PC-3 (cell line): ENCODE measurements at regions of chr5 and their contacts with region 1.

Region 1: GRCh38 chr5:83740741-83741140 is 20.1 kb upstream of the HAPLN1 start:
- DNase-seq: no peak
- ATAC-seq: no peak
- H3K4me3 ChIP-seq: no peak overlapping the region
- H3K27ac ChIP-seq: no peak overlapping the region
- H3K4me1 ChIP-seq: peaks cover 8% of the 10 kb centered on the region; the same call in 1 of the 2 replicates
- H3K27me3 ChIP-seq: no peaks in the 10 kb centered on the region
- CTCF ChIP-seq: no peak

Region 2: DNA sequence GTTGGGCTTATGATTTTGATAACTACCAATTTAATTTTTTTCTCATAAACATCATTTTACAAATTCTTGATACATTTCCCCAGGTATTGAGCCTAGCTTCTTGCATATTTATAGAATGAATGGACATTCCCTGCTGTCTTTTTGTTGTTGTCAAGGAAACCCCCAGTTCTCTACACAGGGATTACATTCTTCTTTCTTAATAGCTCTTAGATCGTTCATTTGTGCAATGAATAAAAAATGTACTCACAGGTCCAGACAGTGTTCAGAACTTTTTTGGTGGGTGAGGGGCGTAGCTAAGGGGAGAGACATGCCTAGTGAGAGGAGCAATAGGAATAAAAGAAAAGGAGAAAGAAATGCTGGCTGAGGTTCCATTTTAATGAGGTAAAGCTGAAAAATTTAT is 210.5 kb before region 1 on chr5:
- CTCF ChIA-PET with region 1: no interaction called
- POLR2A ChIA-PET with region 1: no interaction called
- intact Hi-C with region 1: no loop called
- DNase-seq: no peak
- ATAC-seq: no peak
- H3K4me3 ChIP-seq: no peak overlapping the region
- H3K27ac ChIP-seq: no peak overlapping the region
- H3K4me1 ChIP-seq: no peaks in the 10 kb centered on the region
- H3K27me3 ChIP-seq: no peaks in the 10 kb centered on the region
- CTCF ChIP-seq: no peak

Region 3: GRCh38 chr5:83752700-83753099 is 12.0 kb after region 1 on chr5:
- CTCF ChIA-PET with region 1: no interaction called
- POLR2A ChIA-PET with region 1: no interaction called
- intact Hi-C with region 1: loop called (anchors 1 kb)
- DNase-seq: peak; percentile 34
- ATAC-seq: peak; percentile 81
- H3K4me3 ChIP-seq: no peak overlapping the region
- H3K27ac ChIP-seq: no peak overlapping the region
- H3K4me1 ChIP-seq: 0 out of 2 replicates have a peak, but pooled peaks cover 4% of the 10 kb centered on the region
- H3K27me3 ChIP-seq: no peaks in the 10 kb centered on the region
- CTCF ChIP-seq: no peak

Region 4: GRCh38 chr5:83777856-83778255 is 37.1 kb after region 1 on chr5:
- CTCF ChIA-PET with region 1: no interaction called
- POLR2A ChIA-PET with region 1: no interaction called
- intact Hi-C with region 1: loop called (anchors 5 kb)
- DNase-seq: no peak
- ATAC-seq: no peak
- H3K4me3 ChIP-seq: no peak overlapping the region
- H3K27ac ChIP-seq: no peak overlapping the region
- H3K4me1 ChIP-seq: peaks cover 17% of the 10 kb centered on the region
- H3K27me3 ChIP-seq: no peaks in the 10 kb centered on the region
- CTCF ChIP-seq: no peak